ENCODE measurements at regions of chr1 and their contacts with region 1.

Region 1: GRCh38 chr1:205523891-205524793 is 19.7 kb downstream of the CDK18 start:
- DNase-seq: peak; percentile 89
- ATAC-seq: peak; percentile 29
- H3K4me3 Mint-ChIP-seq: no peak overlapping the region
- H3K27ac Mint-ChIP-seq: no peak overlapping the region
- H3K4me1 Mint-ChIP-seq: peaks cover 45% of the 10 kb centered on the region
- H3K27me3 Mint-ChIP-seq: no peaks in the 10 kb centered on the region; the same call in none of the 2 replicates
- CTCF ChIP-seq: peak; percentile 81

Region 2: GRCh38 chr1:205013683-205014367 is 510.3 kb before region 1 on chr1:
- CTCF ChIA-PET with region 1: no interaction called
- POLR2A ChIA-PET with region 1: no interaction called
- DNase-seq: no peak
- ATAC-seq: peak; percentile 59
- H3K4me3 Mint-ChIP-seq: no peak overlapping the region
- H3K27ac Mint-ChIP-seq: no peak overlapping the region
- H3K4me1 Mint-ChIP-seq: peaks cover 32% of the 10 kb centered on the region
- H3K27me3 Mint-ChIP-seq: no peaks in the 10 kb centered on the region
- CTCF ChIP-seq: no peak

Region 3: DNA sequence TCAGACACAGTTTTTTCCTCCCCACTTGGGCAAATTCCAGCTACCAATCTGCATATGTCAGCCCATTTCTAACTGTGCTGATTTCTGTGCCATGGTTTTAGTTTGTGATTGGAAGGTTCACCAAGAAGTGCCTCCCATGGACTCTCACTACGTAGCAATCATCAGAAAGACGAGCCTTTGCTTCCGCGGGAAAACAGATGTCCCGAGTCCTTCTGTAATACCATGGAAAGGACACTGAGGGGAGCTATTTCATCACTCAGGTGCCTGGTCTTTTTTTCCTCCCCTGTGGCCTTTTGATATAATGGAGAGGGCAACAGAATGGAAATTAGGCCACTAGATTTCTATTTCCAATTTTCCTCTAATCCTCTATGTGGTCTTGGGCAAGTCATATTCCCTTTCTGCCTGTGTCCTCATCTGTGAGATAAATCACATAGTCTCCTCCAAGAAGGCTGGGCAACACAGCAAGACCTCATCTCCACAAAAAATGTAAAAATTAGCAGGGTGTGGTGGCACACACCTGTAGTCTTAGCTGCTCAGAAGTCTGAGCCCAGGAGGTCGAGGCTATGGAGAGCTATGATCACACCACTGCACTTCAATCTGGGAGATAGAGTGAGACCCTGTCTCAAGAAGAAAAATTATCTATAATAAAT is 127.0 kb before region 1 on chr1:
- CTCF ChIA-PET with region 1: interaction called, 38 read pairs
- POLR2A ChIA-PET with region 1: interaction called, 3 read pairs
- DNase-seq: peak; percentile 41
- ATAC-seq: peak; percentile 93
- H3K4me3 Mint-ChIP-seq: no peak overlapping the region
- H3K27ac Mint-ChIP-seq: no peak overlapping the region
- H3K4me1 Mint-ChIP-seq: peaks cover 6% of the 10 kb centered on the region
- H3K27me3 Mint-ChIP-seq: peaks cover 13% of the 10 kb centered on the region
- CTCF ChIP-seq: peak; percentile 71

Region 4: DNA sequence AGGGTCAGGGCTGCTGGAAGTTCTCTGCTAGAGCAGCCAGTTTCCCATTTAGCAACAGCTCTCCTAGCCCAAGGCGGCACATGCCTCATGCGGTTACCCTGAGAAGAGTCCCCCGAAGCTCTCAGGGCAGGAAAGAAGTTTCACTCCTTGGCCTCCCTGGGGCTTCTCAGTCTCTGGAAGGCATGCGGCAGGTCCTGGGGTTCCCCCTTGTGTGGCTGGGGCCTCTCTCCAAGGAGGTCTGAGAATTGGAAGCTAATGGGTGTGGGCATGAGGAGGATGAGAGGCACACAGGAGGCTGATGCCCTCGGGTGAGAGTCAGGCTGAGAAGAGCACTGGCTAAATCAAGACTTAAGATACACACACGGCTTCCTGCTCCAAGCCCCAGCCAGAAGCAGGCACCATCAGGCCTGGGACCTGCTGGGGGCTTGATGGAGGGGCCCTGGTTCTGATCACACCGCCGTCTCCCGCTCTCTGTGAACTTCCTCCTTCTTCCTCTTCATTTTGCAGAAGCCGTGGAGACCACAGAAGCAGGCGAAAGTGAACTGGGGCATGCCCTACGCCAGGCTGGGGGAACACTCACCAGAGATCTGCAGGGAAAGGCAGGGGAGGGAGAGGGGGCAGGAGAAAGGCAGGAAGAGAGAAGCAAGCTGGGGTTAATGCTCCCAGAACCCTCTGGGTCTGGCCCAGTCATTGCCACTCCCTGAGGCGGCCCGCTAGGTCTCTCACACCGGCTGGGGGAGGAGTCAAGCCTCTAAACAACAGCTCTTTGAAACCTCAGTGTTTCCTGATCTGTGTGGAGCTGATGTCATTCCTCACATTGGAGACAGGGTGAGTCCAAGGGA is 83.4 kb before region 1 on chr1:
- CTCF ChIA-PET with region 1: interaction called, 40 read pairs
- POLR2A ChIA-PET with region 1: no interaction called
- DNase-seq: peak; percentile 53
- ATAC-seq: peak; percentile 16
- H3K4me3 Mint-ChIP-seq: no peak overlapping the region
- H3K27ac Mint-ChIP-seq: no peak overlapping the region; the same call in 1 of the 2 replicates
- H3K4me1 Mint-ChIP-seq: peaks cover 91% of the 10 kb centered on the region
- H3K27me3 Mint-ChIP-seq: peaks cover 27% of the 10 kb centered on the region
- CTCF ChIP-seq: no peak

Region 5: DNA sequence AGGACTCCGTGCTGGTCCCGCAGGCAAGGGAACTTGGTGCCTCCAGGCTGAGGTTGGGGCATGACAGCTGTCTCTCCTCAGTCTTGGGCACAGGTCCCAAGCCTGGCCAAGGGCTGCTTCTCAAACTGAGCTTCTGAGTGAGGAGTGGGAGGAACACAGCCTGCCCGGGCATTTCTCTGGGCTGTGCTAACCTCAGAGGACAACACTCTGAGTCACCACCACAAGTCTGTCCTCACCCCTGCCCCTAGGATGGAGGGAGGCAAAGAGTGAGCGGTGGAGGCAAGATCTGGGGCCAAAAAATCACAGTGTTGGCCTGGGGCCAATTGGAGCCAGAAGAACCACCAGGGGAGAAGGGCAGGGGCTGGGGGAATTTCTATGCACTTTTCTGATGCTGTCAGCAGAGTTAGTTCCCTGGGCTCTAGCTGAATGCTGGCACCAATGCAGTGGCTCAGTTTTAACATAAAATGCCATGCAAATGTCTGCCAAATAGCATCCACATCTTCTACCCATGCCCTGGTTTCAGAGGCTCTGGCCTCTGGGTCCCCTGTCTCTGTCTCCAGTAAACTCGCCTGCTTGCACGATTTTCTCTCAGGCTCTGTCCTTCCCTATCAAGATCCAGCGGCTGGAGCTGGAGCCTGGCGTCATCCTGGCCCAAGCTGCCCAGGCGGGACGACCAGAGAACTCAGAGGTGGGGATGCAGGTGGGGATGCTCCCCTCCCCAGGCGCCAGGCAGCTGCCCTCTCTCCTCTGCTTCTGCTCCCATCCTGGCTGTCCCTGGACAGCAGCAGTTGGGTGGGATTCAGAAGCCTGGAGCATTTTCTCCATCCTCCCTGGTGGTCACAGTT is 30.7 kb before region 1 on chr1:
- CTCF ChIA-PET with region 1: interaction called, 613 read pairs
- POLR2A ChIA-PET with region 1: interaction called, 11 read pairs
- DNase-seq: no peak
- ATAC-seq: no peak
- H3K4me3 Mint-ChIP-seq: no peak overlapping the region
- H3K27ac Mint-ChIP-seq: no peak overlapping the region
- H3K4me1 Mint-ChIP-seq: peaks cover 43% of the 10 kb centered on the region
- H3K27me3 Mint-ChIP-seq: peaks cover 24% of the 10 kb centered on the region
- CTCF ChIP-seq: no peak

Region 6: GRCh38 chr1:205535866-205536758 is 12.0 kb after region 1 on chr1:
- CTCF ChIA-PET with region 1: interaction called, 33 read pairs
- POLR2A ChIA-PET with region 1: no interaction called
- DNase-seq: peak; percentile 3
- ATAC-seq: no peak
- H3K4me3 Mint-ChIP-seq: no peak overlapping the region
- H3K27ac Mint-ChIP-seq: no peak overlapping the region
- H3K4me1 Mint-ChIP-seq: peaks cover 4% of the 10 kb centered on the region; the same call in 1 of the 2 replicates
- H3K27me3 Mint-ChIP-seq: peaks cover 59% of the 10 kb centered on the region
- CTCF ChIP-seq: no peak

Region 7: DNA sequence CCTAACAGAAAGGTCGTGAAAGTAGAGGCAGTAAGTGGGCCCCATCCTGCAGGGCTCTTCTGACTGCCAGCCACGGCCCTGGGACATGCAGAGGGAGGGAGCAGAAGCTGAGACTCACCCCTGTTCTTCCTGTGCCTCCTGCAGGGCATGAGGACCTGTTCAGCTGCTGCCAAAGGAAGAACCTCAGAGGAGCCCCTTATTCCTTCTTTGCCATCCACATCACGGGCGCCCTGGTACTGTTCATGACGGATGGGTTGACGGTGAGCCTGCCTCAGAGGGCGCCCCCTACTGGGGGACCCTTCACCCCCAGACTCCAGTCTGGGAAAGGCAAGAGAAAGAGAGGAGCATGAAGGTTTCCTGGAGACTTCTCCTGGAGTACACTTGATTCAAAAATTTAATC is 60.6 kb after region 1 on chr1:
- CTCF ChIA-PET with region 1: interaction called, 20 read pairs
- POLR2A ChIA-PET with region 1: no interaction called
- DNase-seq: no peak
- ATAC-seq: peak; percentile 8; the same call in 1 of the 2 replicates
- H3K4me3 Mint-ChIP-seq: no peak overlapping the region
- H3K27ac Mint-ChIP-seq: no peak overlapping the region
- H3K4me1 Mint-ChIP-seq: peaks cover 4% of the 10 kb centered on the region; the same call in 1 of the 2 replicates
- H3K27me3 Mint-ChIP-seq: peaks cover under 1% of the 10 kb centered on the region; the same call in 1 of the 2 replicates
- CTCF ChIP-seq: peak; percentile 58